OCI-LY7 (cell line): ENCODE measurements at regions of chr19 and their contacts with region 1.

Region 1: DNA sequence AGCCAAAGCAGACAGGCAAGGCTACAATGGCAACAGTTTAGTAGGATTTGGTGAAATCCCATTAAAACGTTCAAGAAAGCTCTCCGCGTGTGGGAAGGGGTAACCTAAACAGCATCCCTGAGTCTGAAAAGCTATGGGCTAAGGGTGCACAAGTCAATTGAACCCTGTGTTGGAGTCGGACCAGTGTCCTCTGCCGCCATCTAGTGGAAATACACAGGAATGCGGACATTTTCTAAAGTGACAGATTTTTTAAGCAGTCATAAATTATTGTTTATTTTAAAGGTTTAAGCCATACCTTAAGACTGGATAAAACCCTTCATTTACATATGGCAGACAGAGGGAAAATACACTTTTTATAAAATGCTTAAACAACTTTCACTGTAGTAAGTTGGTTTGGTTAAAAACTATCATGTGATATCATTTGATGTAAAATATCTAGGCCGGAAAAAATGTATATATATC is 26.5 kb upstream of the LSM14A start:
- DNase-seq: peak; percentile 71
- H3K4me3 ChIP-seq: no peak overlapping the region
- H3K27ac ChIP-seq: no peak overlapping the region
- H3K4me1 ChIP-seq: no peaks in the 10 kb centered on the region
- CTCF ChIP-seq: peak; percentile 95

Region 2: GRCh38 chr19:33595783-33596182 is 550.0 kb before region 1 on chr19:
- CTCF ChIA-PET with region 1: no interaction called
- POLR2A ChIA-PET with region 1: no interaction called
- intact Hi-C with region 1: no loop called
- DNase-seq: no peak
- H3K4me3 ChIP-seq: no peak overlapping the region
- H3K27ac ChIP-seq: no peak overlapping the region
- H3K4me1 ChIP-seq: no peaks in the 10 kb centered on the region
- CTCF ChIP-seq: no peak

Region 3: GRCh38 chr19:34041925-34042521 is 103.7 kb before region 1 on chr19:
- CTCF ChIA-PET with region 1: no interaction called
- POLR2A ChIA-PET with region 1: no interaction called
- intact Hi-C with region 1: loop called (anchors 2 kb)
- DNase-seq: peak; percentile 62
- H3K4me3 ChIP-seq: no peak overlapping the region
- H3K27ac ChIP-seq: no peak overlapping the region
- H3K4me1 ChIP-seq: no peaks in the 10 kb centered on the region
- CTCF ChIP-seq: peak; percentile 98

Region 4: GRCh38 chr19:34215666-34216038 is 69.9 kb after region 1 on chr19:
- CTCF ChIA-PET with region 1: no interaction called
- POLR2A ChIA-PET with region 1: no interaction called
- intact Hi-C with region 1: no loop called
- DNase-seq: no peak
- H3K4me3 ChIP-seq: no peak overlapping the region
- H3K27ac ChIP-seq: no peak overlapping the region
- H3K4me1 ChIP-seq: no peaks in the 10 kb centered on the region
- CTCF ChIP-seq: no peak